ENCODE measurements at regions of chr1 and their contacts with region 1.

Region 1: DNA sequence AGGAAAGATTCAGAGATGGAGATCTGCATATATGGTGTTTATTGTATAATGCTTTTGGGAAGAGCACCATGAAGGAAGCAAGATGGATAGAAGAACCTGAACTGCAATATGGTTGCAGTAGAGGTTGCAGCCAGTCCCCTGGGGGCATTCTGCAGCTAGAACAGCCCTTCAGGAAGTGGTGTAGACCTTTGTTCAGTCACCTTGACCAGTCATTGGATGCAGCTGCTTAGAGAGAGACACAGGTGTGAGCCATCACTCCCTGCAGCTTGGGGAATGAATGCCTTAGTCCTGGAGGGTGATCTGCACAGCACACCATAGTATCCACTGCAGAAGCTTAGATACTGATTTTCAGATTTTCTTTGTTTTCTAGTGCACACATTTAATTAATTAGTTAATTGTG is 42.3 kb downstream of the NEK7 start:
- DNase-seq: no peak
- ATAC-seq: no peak
- H3K4me3 ChIP-seq: no peak overlapping the region
- H3K4me3 Mint-ChIP-seq: peak overlapping the region in 2 of 10 donors; percentile 21 to 43
- H3K27ac ChIP-seq: no peak overlapping the region
- H3K27ac Mint-ChIP-seq: peak overlapping the region in 1 of 9 donors; percentile 31
- H3K4me1 ChIP-seq: peaks cover 11 to 60% of the 10 kb centered on the region in 2 donors
- H3K4me1 Mint-ChIP-seq: peaks cover 46 to 89% (median 78%) of the 10 kb centered on the region in 7 donors
- H3K27me3 ChIP-seq: no peaks in the 10 kb centered on the region
- H3K27me3 Mint-ChIP-seq: no peaks in the 10 kb centered on the region

Region 2: DNA sequence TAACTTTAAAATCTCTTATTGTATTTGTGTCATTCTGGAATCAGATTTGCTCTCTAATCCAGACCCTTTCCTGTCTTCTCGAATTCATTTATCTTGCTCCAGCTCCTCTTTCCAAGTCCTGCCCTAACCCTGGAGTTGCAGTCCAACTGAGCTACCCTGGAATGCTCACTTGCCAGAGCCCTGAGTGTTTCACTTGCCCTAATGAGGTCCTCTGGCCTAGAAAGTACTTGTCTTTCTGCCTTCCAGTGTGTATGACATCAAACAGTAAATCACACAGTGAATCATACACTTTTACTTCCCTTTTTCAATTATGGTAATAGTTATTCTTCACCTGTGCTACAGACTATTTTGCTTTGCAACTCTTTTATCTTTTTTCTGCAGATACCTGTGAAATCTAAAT is 54.6 kb after region 1 on chr1:
- CTCF ChIA-PET with region 1: no interaction called
- POLR2A ChIA-PET with region 1: no interaction called
- intact Hi-C with region 1: loop called in 1 of 2 experiments (anchors 5 kb)
- DNase-seq: no peak
- ATAC-seq: peak; percentile 66
- H3K4me3 ChIP-seq: no peak overlapping the region
- H3K4me3 Mint-ChIP-seq: peak overlapping the region in 1 of 10 donors; percentile 50
- H3K27ac ChIP-seq: no peak overlapping the region
- H3K27ac Mint-ChIP-seq: peak overlapping the region in 8 of 9 donors; percentile 8 to 79 (median 61)
- H3K4me1 ChIP-seq: no peaks in the 10 kb centered on the region
- H3K4me1 Mint-ChIP-seq: peaks cover 24 to 59% (median 50%) of the 10 kb centered on the region in 7 donors
- H3K27me3 ChIP-seq: no peaks in the 10 kb centered on the region
- H3K27me3 Mint-ChIP-seq: no peaks in the 10 kb centered on the region